ENCODE measurements at regions of chr4 and their contacts with region 1.

Region 1: DNA sequence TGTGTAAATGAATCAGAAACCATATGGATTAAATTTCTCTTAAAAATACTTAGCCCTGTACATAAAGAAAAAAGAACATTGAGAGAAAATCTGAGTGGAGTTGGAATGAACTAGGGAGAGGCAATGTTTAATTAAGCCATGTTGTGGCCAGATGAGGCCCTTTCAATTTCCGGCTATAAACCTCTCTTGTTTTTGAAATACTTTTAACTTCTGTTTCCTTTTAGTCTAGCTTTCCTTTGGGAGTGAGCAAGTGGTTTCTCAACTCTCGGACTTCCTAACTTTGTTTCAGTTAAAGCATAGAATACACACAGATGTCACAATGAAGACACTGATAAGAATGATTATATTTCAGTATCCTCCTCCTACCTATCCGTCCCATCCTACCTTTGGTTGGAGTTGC is 197.2 kb downstream of the ARHGAP24 start:
- DNase-seq: no peak
- ATAC-seq: no peak
- H3K4me3 ChIP-seq: peak overlapping the region in 1 of 5 experiments; percentile 22
- H3K4me3 Mint-ChIP-seq: peak overlapping the region; percentile 35
- H3K27ac ChIP-seq: peak overlapping the region; percentile 42 to 65
- H3K27ac Mint-ChIP-seq: peak overlapping the region; percentile 51
- H3K4me1 ChIP-seq: peaks cover 69 to 72% of the 10 kb centered on the region in 2 donors
- H3K4me1 Mint-ChIP-seq: peaks cover 76% of the 10 kb centered on the region
- H3K27me3 ChIP-seq: no peaks in the 10 kb centered on the region
- H3K27me3 Mint-ChIP-seq: no peaks in the 10 kb centered on the region
- CTCF ChIP-seq: no peak

Region 2: GRCh38 chr4:85603437-85604336 is 68.4 kb before region 1 on chr4:
- CTCF ChIA-PET with region 1: no interaction called
- POLR2A ChIA-PET with region 1: no interaction called
- intact Hi-C with region 1: no loop called
- DNase-seq: peak; percentile 72
- ATAC-seq: peak; percentile 42
- H3K4me3 ChIP-seq: peak overlapping the region in 1 of 5 experiments; percentile 6
- H3K4me3 Mint-ChIP-seq: peak overlapping the region; percentile 62
- H3K27ac ChIP-seq: peak overlapping the region; percentile 60 to 91
- H3K27ac Mint-ChIP-seq: peak overlapping the region; percentile 86
- H3K4me1 ChIP-seq: peaks cover 45 to 46% of the 10 kb centered on the region in 2 donors
- H3K4me1 Mint-ChIP-seq: peaks cover 40% of the 10 kb centered on the region
- H3K27me3 ChIP-seq: no peaks in the 10 kb centered on the region
- H3K27me3 Mint-ChIP-seq: no peaks in the 10 kb centered on the region
- CTCF ChIP-seq: no peak

Region 3: GRCh38 chr4:85686398-85686797 is 14.3 kb after region 1 on chr4:
- CTCF ChIA-PET with region 1: interaction called, 3 read pairs
- POLR2A ChIA-PET with region 1: no interaction called
- intact Hi-C with region 1: loop called (anchors 2 kb)
- DNase-seq: no peak
- ATAC-seq: no peak
- H3K4me3 ChIP-seq: no peak overlapping the region
- H3K4me3 Mint-ChIP-seq: no peak overlapping the region
- H3K27ac ChIP-seq: no peak overlapping the region
- H3K27ac Mint-ChIP-seq: no peak overlapping the region
- H3K4me1 ChIP-seq: peaks cover 16 to 21% of the 10 kb centered on the region in 2 donors
- H3K4me1 Mint-ChIP-seq: peaks cover 45% of the 10 kb centered on the region
- H3K27me3 ChIP-seq: no peaks in the 10 kb centered on the region
- H3K27me3 Mint-ChIP-seq: no peaks in the 10 kb centered on the region
- CTCF ChIP-seq: no peak

Region 4: DNA sequence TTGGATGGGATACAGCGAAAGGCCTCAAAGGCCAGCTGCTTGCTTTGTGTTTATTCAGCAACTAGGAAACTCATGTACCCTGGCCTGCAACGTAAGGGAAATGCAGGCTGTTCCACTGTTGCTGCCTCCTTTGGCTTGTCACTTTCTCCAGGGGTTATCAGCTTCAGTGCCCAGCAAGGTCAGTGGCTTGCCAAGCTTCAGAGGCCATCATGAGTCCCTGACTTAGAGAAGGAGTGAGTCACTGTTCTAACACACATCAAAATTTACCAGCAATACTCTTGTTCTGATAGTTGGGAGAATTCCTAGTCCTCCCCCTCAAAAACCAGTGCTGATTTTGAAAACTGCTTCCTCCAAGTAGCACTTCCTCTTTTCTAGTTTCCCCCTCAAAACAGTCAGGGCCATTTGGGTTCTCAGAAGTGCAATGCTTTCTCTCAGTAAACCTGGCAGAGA is 53.6 kb after region 1 on chr4:
- CTCF ChIA-PET with region 1: no interaction called
- POLR2A ChIA-PET with region 1: interaction called, 4 read pairs
- intact Hi-C with region 1: loop called (anchors 5 kb)
- DNase-seq: peak; percentile 80
- ATAC-seq: peak; percentile 87
- H3K4me3 ChIP-seq: peak overlapping the region in 1 of 5 experiments; percentile 34
- H3K4me3 Mint-ChIP-seq: peak overlapping the region; percentile 66
- H3K27ac ChIP-seq: peak overlapping the region; percentile 74 to 82
- H3K27ac Mint-ChIP-seq: peak overlapping the region; percentile 94
- H3K4me1 ChIP-seq: peaks cover 24 to 26% of the 10 kb centered on the region in 2 donors
- H3K4me1 Mint-ChIP-seq: peaks cover 32% of the 10 kb centered on the region
- H3K27me3 ChIP-seq: no peaks in the 10 kb centered on the region
- H3K27me3 Mint-ChIP-seq: no peaks in the 10 kb centered on the region
- CTCF ChIP-seq: no peak